ENCODE measurements at regions of chr17 and their contacts with region 1.

Region 1: GRCh38 chr17:79163071-79163470 is 88.4 kb downstream of the ENGASE start:
- DNase-seq: no peak
- H3K4me3 ChIP-seq: no peak overlapping the region
- H3K27ac ChIP-seq: no peak overlapping the region
- H3K4me1 ChIP-seq: no peaks in the 10 kb centered on the region
- H3K27me3 ChIP-seq: peaks cover 32% of the 10 kb centered on the region
- CTCF ChIP-seq: no peak
- EP300 ChIP-seq: no peak
- POLR2A ChIP-seq: no peak

Region 2: GRCh38 chr17:79306424-79307318 is 143.6 kb after region 1 on chr17:
- in situ Hi-C with region 1: no loop called
- intact Hi-C with region 1: loop called (anchors 1 kb)
- DNase-seq: no peak
- H3K4me3 ChIP-seq: no peak overlapping the region
- H3K27ac ChIP-seq: no peak overlapping the region
- H3K4me1 ChIP-seq: no peaks in the 10 kb centered on the region
- H3K27me3 ChIP-seq: peaks cover 8% of the 10 kb centered on the region
- CTCF ChIP-seq: no peak
- EP300 ChIP-seq: no peak
- POLR2A ChIP-seq: no peak

Measured in transverse colon (tissue), 4 donors.